Common myeloid progenitor, CD34-positive (primary cell): ENCODE measurements at regions of chr17 and their contacts with region 1.

Region 1: DNA sequence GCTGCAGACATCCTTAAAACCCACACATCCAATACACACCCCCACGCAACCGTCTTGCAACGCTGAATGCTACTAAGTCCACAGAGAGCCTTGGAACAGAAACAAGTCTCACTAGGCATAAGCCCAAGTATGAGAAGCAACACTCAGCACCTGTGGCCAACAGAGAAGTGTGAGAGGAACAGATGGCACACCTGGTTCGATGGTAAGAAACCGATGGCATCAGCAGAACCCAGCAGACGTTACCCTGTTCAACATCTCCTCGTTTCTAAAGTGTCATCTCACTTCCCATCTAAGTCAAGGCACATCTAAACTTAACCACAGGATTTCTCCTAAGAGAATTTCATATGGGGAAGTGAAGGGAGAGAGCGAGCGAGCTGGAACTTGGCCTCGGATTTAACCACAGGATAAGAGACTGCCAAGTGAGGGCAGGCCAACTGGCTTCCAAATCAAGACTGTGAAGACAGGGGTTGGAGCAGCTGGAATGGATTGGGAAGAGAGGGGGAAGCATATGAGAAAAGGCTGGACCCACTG is 41.0 kb downstream of the NXPH3 start:
- DNase-seq: peak in 1 of 3 donors; percentile 17
- H3K4me3 ChIP-seq: no peak overlapping the region
- H3K27ac ChIP-seq: no peak overlapping the region
- H3K4me1 ChIP-seq: peaks cover 0 to 7% (median 2%) of the 10 kb centered on the region in 4 experiments
- H3K27me3 ChIP-seq: no peaks in the 10 kb centered on the region

Region 2: GRCh38 chr17:49603720-49604119 is 12.9 kb before region 1 on chr17:
- CTCF ChIA-PET with region 1: interaction called, 17 read pairs
- POLR2A ChIA-PET with region 1: no interaction called
- DNase-seq: peak in 2 of 3 donors; percentile 15 to 26
- H3K4me3 ChIP-seq: no peak overlapping the region
- H3K27ac ChIP-seq: no peak overlapping the region
- H3K4me1 ChIP-seq: peaks cover 0 to 13% (median 2%) of the 10 kb centered on the region in 4 experiments
- H3K27me3 ChIP-seq: no peaks in the 10 kb centered on the region